ENCODE measurements at regions of chr9 and their contacts with region 1.

Region 1: GRCh38 chr9:76297721-76298239 is 96.4 kb downstream of the RFK start:
- DNase-seq: no peak
- ATAC-seq: peak; percentile 90

Region 2: GRCh38 chr9:76219560-76220152 is 78.1 kb before region 1 on chr9:
- intact Hi-C with region 1: loop called (anchors 5 kb)
- DNase-seq: no peak
- ATAC-seq: peak; percentile 80